Sigmoid colon (tissue), 7 donors: ENCODE measurements at regions of chr2 and their contacts with region 1.

Region 1: GRCh38 chr2:219278655-219279516 is at the start of gene DNAJB2:
- DNase-seq: peak; percentile 100
- H3K4me3 ChIP-seq: peak within 1 kb of the TSS; percentile 72 to 86 (median 75)
- H3K27ac ChIP-seq: peak within 1 kb of the TSS; percentile 94 to 99 (median 95)
- H3K4me1 ChIP-seq: peaks cover 0 to 52% (median 45%) of the 10 kb centered on the region in 4 donors
- H3K27me3 ChIP-seq: no peaks in the 10 kb centered on the region
- CTCF ChIP-seq: no peak
- EP300 ChIP-seq: peak; percentile 16 to 97 (median 50)
- POLR2A ChIP-seq: peak; percentile 56 to 73
- total RNA-seq, gene DNAJB2: 27.4 to 42.1 (median 40.0) TPM

Region 2: GRCh38 chr2:219109471-219109870 is 169.4 kb before region 1 on chr2:
- intact Hi-C with region 1: no loop called
- DNase-seq: no peak
- H3K4me3 ChIP-seq: no peak overlapping the region
- H3K27ac ChIP-seq: no peak overlapping the region
- H3K4me1 ChIP-seq: no peaks in the 10 kb centered on the region
- H3K27me3 ChIP-seq: no peaks in the 10 kb centered on the region
- CTCF ChIP-seq: no peak
- EP300 ChIP-seq: no peak
- POLR2A ChIP-seq: no peak

Region 3: DNA sequence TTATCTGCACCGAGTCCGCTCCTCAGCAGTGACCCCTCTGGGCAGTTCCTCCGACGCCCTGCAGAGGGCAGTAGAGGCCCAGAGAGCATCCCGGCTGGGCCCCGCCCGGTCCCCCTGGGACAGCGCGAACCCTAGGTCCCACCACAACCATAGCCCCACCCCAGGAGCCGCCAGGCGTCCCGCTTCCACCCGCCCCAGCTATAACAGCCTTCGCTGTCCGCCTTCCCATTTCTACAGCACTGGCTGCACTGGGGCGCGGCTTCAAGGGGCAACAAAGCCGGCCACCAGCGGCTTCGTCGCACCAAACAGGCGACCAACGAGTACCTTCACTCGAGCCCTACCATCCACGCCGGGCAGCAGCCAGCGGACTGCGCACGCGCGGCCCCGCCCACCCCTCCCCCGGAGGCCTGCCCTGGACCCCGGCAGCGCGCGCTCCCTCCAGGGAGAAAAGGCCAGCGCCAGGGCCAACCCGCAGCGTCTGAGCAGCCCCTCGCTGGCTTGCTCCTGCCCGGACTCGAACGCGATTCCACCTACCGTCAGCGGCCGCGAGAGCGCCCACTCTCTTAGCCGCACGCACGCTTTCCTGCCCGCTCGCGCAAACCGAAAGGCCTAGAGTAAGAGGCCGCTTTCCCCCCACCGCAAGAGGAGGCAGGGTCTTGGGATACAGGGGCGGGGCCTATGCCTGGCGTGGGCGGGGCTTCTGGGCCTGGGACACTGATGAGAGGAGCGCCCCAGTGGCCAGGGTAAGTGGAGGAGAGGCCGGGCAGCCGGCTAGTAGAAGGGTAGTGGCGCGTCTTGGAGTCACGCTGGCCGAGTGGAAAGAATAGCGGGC is 118.5 kb before region 1 on chr2 and contains the start of gene NHEJ1:
- intact Hi-C with region 1: loop called (anchors 1 kb)
- DNase-seq: peak; percentile 99
- H3K4me3 ChIP-seq: peak within 1 kb of the TSS; percentile 70 to 75 (median 72)
- H3K27ac ChIP-seq: peak within 1 kb of the TSS; percentile 93 to 99 (median 96)
- H3K4me1 ChIP-seq: peaks cover 0 to 13% (median 10%) of the 10 kb centered on the region in 4 donors
- H3K27me3 ChIP-seq: no peaks in the 10 kb centered on the region
- CTCF ChIP-seq: peak; percentile 93 to 100 (median 98)
- EP300 ChIP-seq: no peak
- POLR2A ChIP-seq: peak; percentile 42 to 53
- total RNA-seq, gene NHEJ1: 15.1 to 22.5 (median 18.4) TPM

Region 4: GRCh38 chr2:219218732-219219701 is 59.9 kb before region 1 on chr2 and contains the start of gene ABCB6:
- intact Hi-C with region 1: loop called (anchors 5 kb)
- DNase-seq: peak; percentile 99
- H3K4me3 ChIP-seq: peak within 1 kb of the TSS; percentile 41 to 62 (median 54)
- H3K27ac ChIP-seq: peak within 1 kb of the TSS; percentile 84 to 98 (median 96)
- H3K4me1 ChIP-seq: peaks cover 0 to 37% (median 32%) of the 10 kb centered on the region in 4 donors
- H3K27me3 ChIP-seq: no peaks in the 10 kb centered on the region
- CTCF ChIP-seq: no peak
- EP300 ChIP-seq: no peak
- POLR2A ChIP-seq: peak in 1 of 2 donors; percentile 47
- total RNA-seq, gene ABCB6: 11.8 to 23.0 (median 16.1) TPM

Region 5: DNA sequence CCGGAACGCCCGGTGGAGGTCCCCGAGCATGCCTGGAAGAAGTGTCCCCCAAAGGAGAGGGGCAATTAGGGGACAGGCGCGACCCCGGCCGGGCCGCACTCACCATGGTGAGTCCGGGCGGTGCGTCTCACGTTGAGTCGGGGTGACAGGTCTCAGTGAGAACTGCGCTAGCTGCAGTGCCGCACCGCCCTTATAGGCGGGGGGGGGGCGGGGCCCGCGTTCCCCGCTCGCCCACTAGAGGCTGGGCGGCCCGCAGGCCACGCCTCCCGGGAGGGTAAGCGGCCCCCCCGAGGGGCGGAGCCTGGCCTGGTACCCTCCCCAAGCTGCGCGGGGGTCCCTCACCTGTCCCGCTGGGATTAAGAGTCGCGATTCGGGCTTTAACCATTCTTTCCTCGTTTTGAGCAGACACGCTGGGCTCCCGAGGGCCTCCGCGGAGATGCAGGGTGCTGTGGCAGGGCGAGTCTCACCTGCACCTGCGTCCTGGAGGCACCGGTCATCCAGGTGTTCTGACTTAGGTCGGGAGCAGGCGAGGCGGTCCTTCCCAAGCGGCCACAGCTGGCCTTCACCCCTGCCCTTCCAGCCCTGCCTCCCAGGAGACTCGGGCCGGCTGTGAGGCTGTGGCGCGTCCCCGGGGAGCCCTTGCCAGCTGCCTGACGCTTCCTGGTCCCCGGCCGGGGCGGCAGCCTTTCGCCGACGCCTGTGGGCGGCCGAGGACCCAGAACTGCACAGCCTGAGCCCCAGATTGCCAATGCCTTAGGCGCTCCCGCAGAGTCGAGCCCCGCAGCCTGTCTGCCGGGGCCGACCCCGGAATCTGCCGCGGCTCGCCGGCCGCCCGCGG is 24.9 kb before region 1 on chr2 and contains the start of gene TUBA4A:
- intact Hi-C with region 1: loop called (anchors 2 kb)
- DNase-seq: peak; percentile 94
- H3K4me3 ChIP-seq: peak within 1 kb of the TSS; percentile 56 to 74 (median 60)
- H3K27ac ChIP-seq: peak within 1 kb of the TSS; percentile 79 to 87 (median 84)
- H3K4me1 ChIP-seq: peaks cover 0 to 52% (median 45%) of the 10 kb centered on the region in 4 donors
- H3K27me3 ChIP-seq: no peaks in the 10 kb centered on the region
- CTCF ChIP-seq: peak in 1 of 4 experiments; percentile 28
- EP300 ChIP-seq: no peak
- POLR2A ChIP-seq: peak; percentile 87 to 96
- total RNA-seq, gene TUBA4A: 47.1 to 109 (median 55.0) TPM

Region 6: DNA sequence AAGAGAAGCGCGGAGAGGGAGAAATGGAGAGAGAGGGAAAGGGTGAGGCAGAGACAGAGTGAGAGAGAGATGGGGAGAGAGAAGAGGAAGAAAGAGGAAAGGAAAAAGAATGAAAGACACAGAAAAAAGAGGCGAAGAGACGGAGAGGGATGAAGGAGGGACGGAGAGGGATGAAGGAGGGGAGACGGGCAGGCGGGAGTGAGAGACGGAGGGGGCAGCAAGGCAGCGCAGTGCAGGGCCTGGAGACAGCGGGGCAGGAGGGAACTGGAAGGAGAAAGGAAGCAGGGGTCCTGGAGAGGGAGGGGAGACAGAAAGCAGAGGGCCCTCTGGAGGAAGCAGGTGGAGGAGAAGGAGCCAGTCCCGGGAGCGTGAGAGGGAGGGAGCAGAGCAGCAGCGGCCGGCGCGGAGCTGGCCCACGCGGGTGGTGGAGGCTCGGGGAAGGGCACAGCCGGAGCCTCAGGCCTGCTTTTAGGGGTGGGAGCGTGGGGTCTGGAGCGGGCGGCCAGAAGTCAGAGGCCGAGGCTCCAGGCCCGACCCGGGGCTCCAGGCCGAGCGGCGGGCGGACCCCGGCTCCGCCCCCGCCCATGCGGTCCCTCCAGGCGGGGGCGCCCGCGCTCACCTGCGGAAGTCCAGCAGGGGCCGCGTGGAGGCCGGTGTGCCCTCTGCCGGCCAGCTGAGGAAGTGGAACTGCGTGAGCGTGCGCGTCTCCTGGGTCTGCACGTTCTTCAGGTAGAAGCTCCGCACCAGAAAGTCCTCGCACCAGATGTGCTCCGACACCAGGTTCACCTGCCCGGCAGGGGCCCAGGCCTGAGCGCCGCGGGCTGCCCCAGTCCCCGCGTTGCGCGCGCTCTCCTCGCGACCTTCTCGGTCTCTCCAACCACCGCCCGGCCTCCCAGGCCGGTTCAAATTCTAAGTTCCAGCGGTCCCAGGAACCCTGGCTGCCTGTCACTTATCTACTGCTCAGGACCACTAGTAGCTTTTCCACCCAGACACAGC is 15.8 kb after region 1 on chr2:
- intact Hi-C with region 1: loop called (anchors 1 kb)
- DNase-seq: peak; percentile 91
- H3K4me3 ChIP-seq: peak overlapping the region; percentile 43 to 65 (median 54)
- H3K27ac ChIP-seq: peak overlapping the region; percentile 84 to 91 (median 90)
- H3K4me1 ChIP-seq: peaks cover 0 to 19% (median 18%) of the 10 kb centered on the region in 4 donors
- H3K27me3 ChIP-seq: peaks cover 0 to 2% (median 2%) of the 10 kb centered on the region in 3 donors
- CTCF ChIP-seq: peak; percentile 85 to 99 (median 91)
- EP300 ChIP-seq: no peak
- POLR2A ChIP-seq: no peak

Region 7: DNA sequence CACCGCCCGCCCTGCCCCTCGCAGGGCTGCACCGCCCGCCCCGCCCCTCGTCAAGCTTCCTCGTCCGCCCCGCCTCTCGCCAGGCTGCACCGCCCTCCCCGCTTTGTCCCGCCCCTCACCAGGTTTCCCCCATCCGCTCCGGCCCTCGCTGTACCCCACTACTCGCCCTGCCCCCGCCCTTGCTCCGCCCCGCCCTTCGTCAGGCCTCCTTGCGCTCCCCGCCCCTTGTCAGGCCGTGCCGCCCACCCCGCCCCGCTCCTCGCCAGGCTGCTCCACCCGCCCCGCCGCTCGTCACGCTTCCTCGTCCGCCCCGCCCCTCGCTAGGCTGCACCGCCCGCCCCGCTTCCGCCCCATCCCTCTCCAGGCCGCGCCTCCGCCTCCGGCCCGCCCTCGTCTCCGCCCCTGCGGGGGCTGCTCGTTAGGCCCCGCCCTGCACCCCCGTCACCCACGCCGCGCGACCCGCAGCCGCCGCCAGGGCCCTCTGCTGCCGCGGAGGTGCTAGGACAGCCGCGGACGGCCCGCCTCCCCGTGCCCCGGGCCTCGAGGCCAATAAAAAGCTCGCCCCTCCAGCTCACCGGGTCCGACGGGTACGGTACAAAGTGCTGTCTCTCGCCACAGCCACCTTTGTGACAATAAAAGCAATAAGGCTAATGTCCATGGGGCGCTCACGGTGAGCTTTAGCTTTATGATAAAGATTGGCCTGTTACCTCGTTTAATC is 109.4 kb after region 1 on chr2:
- intact Hi-C with region 1: loop called (anchors 5 kb)
- DNase-seq: peak; percentile 100
- H3K4me3 ChIP-seq: peak overlapping the region; percentile 16 to 88 (median 84)
- H3K27ac ChIP-seq: peak overlapping the region; percentile 94 to 97 (median 96)
- H3K4me1 ChIP-seq: peaks cover 0 to 32% (median 26%) of the 10 kb centered on the region in 4 donors
- H3K27me3 ChIP-seq: no peaks in the 10 kb centered on the region
- CTCF ChIP-seq: peak; percentile 35 to 68 (median 48)
- EP300 ChIP-seq: no peak
- POLR2A ChIP-seq: no peak